ENCODE measurements at regions of chr19 and their contacts with region 1.

Region 1: GRCh38 chr19:45792470-45793177 is at the start of gene DMWD:
- DNase-seq: peak; percentile 90 to 99
- ATAC-seq: peak; percentile 90 to 93
- H3K4me3 ChIP-seq: peak within 1 kb of the TSS; percentile 97
- H3K27ac ChIP-seq: peak within 1 kb of the TSS; percentile 87 to 98
- H3K4me1 ChIP-seq: peaks cover 19% of the 10 kb centered on the region
- CTCF ChIP-seq: no peak
- EP300 ChIP-seq: no peak
- POLR2A ChIP-seq: peak; percentile 86
- RAD21 ChIP-seq: no peak
- polyA plus RNA-seq, gene DMWD: 17.1 and 17.5 TPM in 2 replicates

Region 2: DNA sequence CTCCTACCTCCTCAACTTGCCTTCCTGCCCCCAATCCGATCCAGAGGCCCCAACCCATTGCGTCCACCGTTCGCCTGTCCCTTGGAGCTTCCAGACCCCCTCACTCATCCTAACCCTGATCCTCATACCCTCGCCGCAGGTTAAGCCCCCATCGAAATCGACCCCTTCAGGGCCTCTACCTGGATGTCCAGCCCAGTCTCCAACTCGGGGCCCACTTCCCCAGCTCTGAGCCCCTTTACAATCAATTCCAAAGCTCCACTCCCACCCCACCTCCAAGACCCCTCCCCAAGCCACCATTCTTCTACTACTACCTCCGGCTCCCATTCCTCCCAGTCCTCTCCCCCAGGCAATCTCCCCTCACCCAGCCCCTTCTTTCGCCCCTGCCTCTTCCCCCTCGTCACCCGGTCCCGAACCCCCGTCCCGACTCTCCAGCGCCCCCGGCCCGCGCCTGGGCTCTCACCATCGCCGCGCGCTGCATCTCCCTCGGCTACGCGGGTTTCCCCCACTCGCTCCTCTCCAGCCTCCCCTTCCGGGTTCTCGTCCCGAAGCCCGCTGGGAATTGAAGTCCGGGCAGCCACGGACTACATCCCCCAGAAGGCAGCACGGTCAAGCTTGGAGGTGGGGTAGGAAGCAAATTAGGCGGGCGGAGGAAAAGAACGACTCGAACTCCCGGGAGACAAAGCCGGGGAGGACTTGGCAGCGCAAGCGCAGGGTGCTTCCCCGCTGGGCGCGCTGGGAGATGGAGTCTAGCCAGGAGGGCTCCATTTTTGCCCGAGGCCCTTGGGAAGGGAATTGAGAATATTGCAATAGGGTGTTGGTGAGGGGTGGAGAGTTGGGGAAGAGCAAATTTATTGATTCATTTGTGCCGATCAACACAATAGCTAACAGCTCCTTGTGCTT is 62.0 kb before region 1 on chr19 and contains the start of gene FBXO46:
- CTCF ChIA-PET with region 1: no interaction called
- POLR2A ChIA-PET with region 1: no interaction called
- DNase-seq: peak; percentile 98 to 99
- ATAC-seq: peak; percentile 98 to 99
- H3K4me3 ChIP-seq: peak within 1 kb of the TSS; percentile 89
- H3K27ac ChIP-seq: peak within 1 kb of the TSS; percentile 92 to 95
- H3K4me1 ChIP-seq: peaks cover 24% of the 10 kb centered on the region
- CTCF ChIP-seq: no peak
- EP300 ChIP-seq: no peak
- POLR2A ChIP-seq: peak; percentile 75
- RAD21 ChIP-seq: peak; percentile 14 to 23; a peak in 2 of 5 replicates
- polyA plus RNA-seq, gene FBXO46: 4.9 and 6.9 TPM in 2 replicates

Region 3: DNA sequence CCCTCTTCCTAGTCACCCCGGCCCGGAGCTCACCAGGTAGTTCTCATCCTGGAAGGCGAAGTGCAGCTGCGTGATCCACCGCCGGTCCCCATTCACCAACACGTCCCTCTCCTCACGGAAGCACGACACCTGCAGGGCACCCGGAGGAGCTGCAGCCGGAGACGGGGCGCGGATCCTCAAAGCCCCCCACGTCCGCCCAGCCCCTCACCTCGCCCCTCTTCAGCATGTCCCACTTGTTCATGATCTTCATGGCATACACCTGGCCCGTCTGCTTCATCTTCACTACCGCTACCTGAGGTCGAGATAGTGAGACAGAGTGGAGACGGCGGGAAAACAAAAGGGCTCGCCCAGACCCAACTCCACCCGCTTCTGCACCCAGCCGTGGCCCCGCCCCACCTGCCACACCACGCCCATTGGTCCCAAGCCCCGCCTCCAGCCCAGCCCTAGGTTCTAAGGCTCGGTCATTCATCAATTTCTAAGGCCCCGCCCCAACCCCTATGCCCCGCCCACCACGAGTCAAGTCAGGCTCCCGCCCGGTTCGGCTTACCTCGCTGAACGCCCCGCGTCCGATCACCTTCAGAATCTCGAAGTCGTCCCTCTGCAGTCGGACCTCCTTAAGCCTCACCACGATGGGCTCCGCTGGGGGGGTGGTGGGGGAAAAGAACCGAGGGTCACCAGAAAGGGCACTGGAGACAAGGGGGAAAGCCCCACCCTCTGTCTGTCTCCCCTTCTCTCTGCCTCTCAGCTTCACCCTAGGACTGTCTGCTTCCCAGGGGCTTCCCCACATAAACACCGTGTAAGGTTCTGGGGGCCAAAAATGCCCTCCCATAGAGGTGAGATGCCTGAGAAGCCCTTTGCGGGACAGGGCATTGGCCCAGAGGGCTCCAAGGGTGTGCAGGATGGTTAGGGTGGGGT is 13.1 kb before region 1 on chr19:
- CTCF ChIA-PET with region 1: interaction called, 2,204 read pairs
- POLR2A ChIA-PET with region 1: interaction called, 30 read pairs
- DNase-seq: peak; percentile 94 to 95
- ATAC-seq: peak; percentile 37 to 76
- H3K4me3 ChIP-seq: peak overlapping the region; percentile 35
- H3K27ac ChIP-seq: peak overlapping the region; percentile 90 to 96; a peak in 5 of 6 replicates
- H3K4me1 ChIP-seq: peaks cover 55% of the 10 kb centered on the region
- CTCF ChIP-seq: peak; percentile 74
- EP300 ChIP-seq: no peak
- POLR2A ChIP-seq: no peak
- RAD21 ChIP-seq: peak; percentile 45 to 49; a peak in 4 of 5 replicates

Measured in A549 (cell line).